Activated naive CD4-positive, alpha-beta T cell treated with anti-CD3 and anti-CD28 coated beads for 36 hours (primary cell): ENCODE measurements at regions of chr10 and their contacts with region 1.

Region 1: GRCh38 chr10:62050893-62051433 is 149.5 kb downstream of the ARID5B start:
- DNase-seq: peak; percentile 91
- H3K4me3 Mint-ChIP-seq: peak overlapping the region; percentile 94
- H3K27ac Mint-ChIP-seq: peak overlapping the region; percentile 100
- H3K4me1 Mint-ChIP-seq: peaks cover 87% of the 10 kb centered on the region
- H3K27me3 Mint-ChIP-seq: no peaks in the 10 kb centered on the region

Region 2: DNA sequence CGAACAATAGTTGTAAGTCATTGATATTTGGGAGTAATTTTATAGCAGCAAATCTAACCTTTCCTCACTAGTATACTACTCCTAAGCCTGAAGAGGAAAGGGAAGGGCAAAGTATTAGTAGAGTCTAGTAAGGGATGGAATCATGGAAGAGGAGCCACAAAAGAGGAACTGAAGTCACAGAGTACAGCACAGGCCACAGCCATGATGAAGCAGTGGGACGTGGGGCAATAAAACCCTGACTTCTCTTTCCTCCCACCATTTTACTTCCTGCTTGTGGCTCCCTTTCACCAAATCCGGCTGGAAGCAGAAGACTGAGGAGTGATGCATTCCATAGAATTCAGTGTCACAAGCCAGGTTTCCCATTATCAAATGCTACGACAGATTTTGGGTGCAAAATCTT is 329.5 kb before region 1 on chr10:
- CTCF ChIA-PET with region 1: no interaction called
- intact Hi-C with region 1: no loop called
- DNase-seq: no peak
- H3K4me3 Mint-ChIP-seq: no peak overlapping the region
- H3K27ac Mint-ChIP-seq: no peak overlapping the region
- H3K4me1 Mint-ChIP-seq: no peaks in the 10 kb centered on the region
- H3K27me3 Mint-ChIP-seq: peaks cover 3% of the 10 kb centered on the region

Region 3: GRCh38 chr10:61896854-61897661 is 153.9 kb before region 1 on chr10:
- CTCF ChIA-PET with region 1: interaction called, 11 read pairs
- intact Hi-C with region 1: loop called (anchors 1 kb)
- DNase-seq: peak; percentile 78
- H3K4me3 Mint-ChIP-seq: peak overlapping the region; percentile 77
- H3K27ac Mint-ChIP-seq: peak overlapping the region; percentile 90
- H3K4me1 Mint-ChIP-seq: peaks cover 40% of the 10 kb centered on the region
- H3K27me3 Mint-ChIP-seq: no peaks in the 10 kb centered on the region

Region 4: GRCh38 chr10:61987951-61988379 is 63.0 kb before region 1 on chr10:
- CTCF ChIA-PET with region 1: interaction called, 8 read pairs
- intact Hi-C with region 1: loop called (anchors 1 kb)
- DNase-seq: peak; percentile 64
- H3K4me3 Mint-ChIP-seq: peak overlapping the region; percentile 51
- H3K27ac Mint-ChIP-seq: peak overlapping the region; percentile 96
- H3K4me1 Mint-ChIP-seq: peaks cover 89% of the 10 kb centered on the region
- H3K27me3 Mint-ChIP-seq: no peaks in the 10 kb centered on the region

Region 5: GRCh38 chr10:62038609-62039190 is 12.3 kb before region 1 on chr10:
- CTCF ChIA-PET with region 1: interaction called, 37 read pairs
- intact Hi-C with region 1: loop called (anchors 1 kb)
- DNase-seq: peak; percentile 90
- H3K4me3 Mint-ChIP-seq: peak overlapping the region; percentile 14
- H3K27ac Mint-ChIP-seq: peak overlapping the region; percentile 91
- H3K4me1 Mint-ChIP-seq: peaks cover 85% of the 10 kb centered on the region
- H3K27me3 Mint-ChIP-seq: no peaks in the 10 kb centered on the region

Region 6: GRCh38 chr10:62069452-62070178 is 18.7 kb after region 1 on chr10:
- CTCF ChIA-PET with region 1: no interaction called
- intact Hi-C with region 1: no loop called
- DNase-seq: no peak
- H3K4me3 Mint-ChIP-seq: no peak overlapping the region
- H3K27ac Mint-ChIP-seq: peak overlapping the region; percentile 34
- H3K4me1 Mint-ChIP-seq: peaks cover 74% of the 10 kb centered on the region
- H3K27me3 Mint-ChIP-seq: no peaks in the 10 kb centered on the region

Region 7: DNA sequence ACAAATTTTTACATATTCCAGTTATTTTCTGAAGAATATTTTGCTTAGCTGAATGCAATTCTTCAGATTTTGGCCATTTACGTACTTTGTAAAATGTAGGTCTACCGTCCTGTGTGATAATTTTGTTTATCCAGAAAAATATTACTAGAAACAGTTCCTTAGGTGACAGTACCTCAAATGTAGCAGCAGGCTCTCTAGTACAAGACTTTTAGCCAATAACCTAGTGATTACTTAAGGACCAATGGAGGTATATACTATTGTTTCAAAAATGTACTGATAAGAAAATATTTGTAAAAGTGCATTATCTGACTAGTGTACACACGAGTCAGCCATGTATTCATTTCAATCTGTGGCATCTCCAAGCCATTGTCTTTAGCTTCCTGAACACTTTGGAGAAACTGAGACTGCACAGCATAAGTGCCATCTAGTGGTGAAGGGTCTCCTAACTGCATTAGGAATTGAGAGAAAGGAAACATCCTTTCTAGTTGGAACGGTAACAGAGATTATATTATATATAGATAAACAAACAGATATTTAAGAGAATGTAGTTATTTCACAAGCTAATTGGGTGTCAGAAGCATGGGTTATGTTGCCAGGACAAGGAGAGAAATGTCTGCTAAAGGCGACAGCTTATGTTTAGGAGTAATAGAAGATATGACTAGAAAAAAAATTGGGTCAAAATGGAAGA is 194.0 kb after region 1 on chr10:
- CTCF ChIA-PET with region 1: interaction called, 16 read pairs
- intact Hi-C with region 1: loop called (anchors 1 kb)
- DNase-seq: peak; percentile 74
- H3K4me3 Mint-ChIP-seq: no peak overlapping the region
- H3K27ac Mint-ChIP-seq: peak overlapping the region; percentile 76
- H3K4me1 Mint-ChIP-seq: peaks cover 38% of the 10 kb centered on the region
- H3K27me3 Mint-ChIP-seq: no peaks in the 10 kb centered on the region

Region 8: GRCh38 chr10:62732841-62733653 is 682.1 kb after region 1 on chr10:
- CTCF ChIA-PET with region 1: no interaction called
- intact Hi-C with region 1: loop called (anchors 2 kb)
- DNase-seq: peak; percentile 67
- H3K4me3 Mint-ChIP-seq: peak overlapping the region; percentile 26
- H3K27ac Mint-ChIP-seq: no peak overlapping the region
- H3K4me1 Mint-ChIP-seq: peaks cover 20% of the 10 kb centered on the region
- H3K27me3 Mint-ChIP-seq: peaks cover 5% of the 10 kb centered on the region